ENCODE measurements at regions of chr2 and their contacts with region 1.

Region 1: DNA sequence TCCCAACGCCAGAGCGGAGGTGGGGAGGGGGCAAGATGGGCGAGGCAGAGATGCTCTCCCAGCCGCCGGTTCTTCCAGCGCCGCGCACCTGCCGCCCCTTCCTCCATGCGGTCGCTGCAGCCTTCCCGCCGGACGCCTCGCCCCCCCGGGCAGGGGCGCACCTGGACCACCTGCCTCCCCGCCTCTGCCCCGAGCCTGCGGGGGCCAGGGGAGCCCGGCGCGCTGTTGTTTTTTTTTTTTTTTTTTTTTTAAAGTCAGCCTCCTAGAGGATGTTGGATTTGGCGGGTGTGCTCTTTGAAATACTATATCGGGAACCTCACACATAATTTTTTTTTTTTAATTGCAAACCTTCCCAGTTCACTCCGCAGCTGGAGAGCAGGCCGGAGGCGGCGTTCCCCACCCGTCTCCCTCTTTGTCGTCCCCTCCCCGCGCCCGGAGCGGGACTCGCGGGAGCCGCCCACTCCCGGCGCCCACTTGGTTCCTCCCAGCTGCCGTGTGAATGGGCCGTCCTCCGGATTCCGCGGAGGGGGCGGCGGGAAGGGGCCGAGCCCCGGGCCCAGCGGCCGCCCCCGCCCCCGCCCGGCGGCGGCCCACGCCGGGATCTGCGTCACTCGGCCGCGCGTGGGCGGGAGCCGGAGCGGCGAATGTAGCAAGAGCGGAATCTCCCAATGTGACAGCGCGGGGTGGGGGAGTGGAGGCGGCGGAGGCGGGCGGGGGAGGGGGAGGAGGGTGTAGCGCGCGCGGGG is 421 bp upstream of the NAB1 start:
- DNase-seq: peak; percentile 90
- CTCF ChIP-seq: no peak

Region 2: DNA sequence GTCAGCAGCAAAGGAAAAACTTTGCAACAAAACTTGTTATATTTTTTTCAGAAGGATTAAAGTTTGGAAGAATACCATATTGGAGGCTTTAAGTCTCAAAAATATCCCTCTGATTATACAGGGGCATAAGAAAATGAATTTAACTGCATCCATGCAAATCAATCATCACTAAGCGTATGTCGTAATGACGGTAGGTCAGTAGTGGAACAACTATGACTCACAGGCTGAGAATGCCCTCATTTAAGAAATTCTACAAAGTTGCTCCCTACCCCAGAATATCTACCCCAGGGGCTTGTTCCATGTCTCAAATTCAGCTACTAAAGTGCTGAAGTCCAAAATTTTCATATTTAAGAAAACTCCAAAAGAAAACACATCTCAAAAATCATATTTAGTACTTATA is 12.1 kb before region 1 on chr2:
- CTCF ChIA-PET with region 1: interaction called, 10 read pairs
- POLR2A ChIA-PET with region 1: no interaction called
- DNase-seq: no peak
- CTCF ChIP-seq: no peak

Region 3: GRCh38 chr2:190664240-190664639 is 15.8 kb after region 1 on chr2:
- CTCF ChIA-PET with region 1: interaction called, 53 read pairs
- POLR2A ChIA-PET with region 1: no interaction called
- DNase-seq: no peak
- CTCF ChIP-seq: no peak

Measured in GM10248 (cell line).